ENCODE measurements at regions of chr11 and their contacts with region 1.

Region 1: GRCh38 chr11:47176328-47177228 is at the start of gene ARFGAP2:
- DNase-seq: peak; percentile 85 to 97
- H3K4me3 ChIP-seq: peak within 1 kb of the TSS; percentile 95
- H3K27ac ChIP-seq: peak within 1 kb of the TSS; percentile 77
- H3K4me1 ChIP-seq: peaks cover 12% of the 10 kb centered on the region
- H3K27me3 ChIP-seq: no peaks in the 10 kb centered on the region
- CTCF ChIP-seq: no peak
- total RNA-seq, gene ARFGAP2: 122 and 130 TPM in 2 replicates

Region 2: DNA sequence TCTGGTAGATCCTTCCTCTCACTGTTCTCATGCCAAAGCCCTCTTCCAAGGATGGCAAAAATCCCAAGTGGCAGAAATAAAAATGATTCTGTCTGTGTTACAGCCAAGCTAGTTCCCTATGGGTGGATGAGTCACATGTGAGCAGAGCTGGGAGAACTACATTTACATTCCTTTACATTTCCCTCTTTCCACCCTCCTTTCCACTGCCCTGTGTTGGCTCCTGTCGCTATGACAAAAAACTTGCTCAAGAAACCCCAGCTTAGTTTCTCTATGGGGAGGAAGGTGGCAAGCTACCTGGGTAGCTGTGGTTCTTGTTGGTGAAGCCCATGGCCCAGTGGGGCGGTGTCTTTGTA is 28.0 kb after region 1 on chr11:
- CTCF ChIA-PET with region 1: no interaction called
- POLR2A ChIA-PET with region 1: interaction called, 10 read pairs
- intact Hi-C with region 1: no loop called
- DNase-seq: peak; percentile 61 to 89
- H3K4me3 ChIP-seq: no peak overlapping the region
- H3K27ac ChIP-seq: peak overlapping the region; percentile 70
- H3K4me1 ChIP-seq: peaks cover 20% of the 10 kb centered on the region
- H3K27me3 ChIP-seq: no peaks in the 10 kb centered on the region
- CTCF ChIP-seq: no peak

Region 3: DNA sequence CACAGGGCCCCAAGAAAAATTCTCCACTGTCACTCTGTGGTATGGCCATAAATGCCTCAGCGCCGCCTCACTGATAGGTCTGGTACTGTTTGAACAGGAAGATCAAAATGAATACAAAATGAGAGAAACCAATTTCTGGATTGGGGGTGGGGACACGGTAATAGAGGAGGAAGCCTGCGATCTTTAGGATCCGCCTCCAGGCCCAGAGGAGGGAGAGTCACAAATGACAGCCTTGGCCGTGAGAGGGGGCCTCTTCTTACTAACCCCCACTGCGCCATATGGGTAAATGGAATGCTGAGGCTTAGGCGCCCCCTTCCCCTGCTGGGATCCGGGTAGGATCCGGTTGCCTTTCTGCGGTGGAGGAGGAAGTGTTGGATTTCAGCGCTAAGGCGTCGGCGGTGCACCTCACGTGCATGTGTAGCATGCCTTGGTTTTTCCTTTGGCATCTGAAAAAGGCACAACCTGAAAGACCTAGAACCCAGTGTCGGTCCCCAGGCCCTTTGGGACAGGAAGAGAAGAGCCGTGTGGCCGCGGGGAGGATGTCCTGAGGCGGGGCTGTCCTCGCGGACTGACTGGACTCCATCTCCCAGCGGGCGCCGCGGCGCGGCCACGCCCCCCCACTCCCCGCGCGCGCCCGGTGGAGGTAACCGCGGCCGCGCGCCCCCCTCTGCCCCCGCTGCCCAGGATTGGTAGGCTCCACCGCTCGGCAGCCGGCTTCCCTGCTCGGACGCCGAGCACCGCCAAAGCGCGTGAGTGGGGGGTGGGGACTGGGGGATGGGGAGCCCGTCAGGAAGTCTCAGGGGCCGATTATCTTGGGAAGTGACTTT is 92.6 kb after region 1 on chr11:
- CTCF ChIA-PET with region 1: interaction called, 6 read pairs
- POLR2A ChIA-PET with region 1: no interaction called
- intact Hi-C with region 1: loop called (anchors 1 kb)
- DNase-seq: peak; percentile 83 to 89
- H3K4me3 ChIP-seq: peak overlapping the region; percentile 72
- H3K27ac ChIP-seq: peak overlapping the region; percentile 69
- H3K4me1 ChIP-seq: peaks cover 50% of the 10 kb centered on the region
- H3K27me3 ChIP-seq: no peaks in the 10 kb centered on the region
- CTCF ChIP-seq: peak; percentile 46